Heart left ventricle (tissue), 16 donors: ENCODE measurements at regions of chr17 and their contacts with region 1.

Region 1: GRCh38 chr17:55757659-55758058 is 6.8 kb downstream of the PCTP start:
- DNase-seq: no peak
- ATAC-seq: no peak
- H3K4me3 ChIP-seq: no peak overlapping the region
- H3K27ac ChIP-seq: no peak overlapping the region
- H3K4me1 ChIP-seq: peaks cover 0 to 30% (median 5%) of the 10 kb centered on the region in 12 donors
- H3K27me3 ChIP-seq: no peaks in the 10 kb centered on the region
- CTCF ChIP-seq: no peak
- POLR2A ChIP-seq: no peak

Region 2: DNA sequence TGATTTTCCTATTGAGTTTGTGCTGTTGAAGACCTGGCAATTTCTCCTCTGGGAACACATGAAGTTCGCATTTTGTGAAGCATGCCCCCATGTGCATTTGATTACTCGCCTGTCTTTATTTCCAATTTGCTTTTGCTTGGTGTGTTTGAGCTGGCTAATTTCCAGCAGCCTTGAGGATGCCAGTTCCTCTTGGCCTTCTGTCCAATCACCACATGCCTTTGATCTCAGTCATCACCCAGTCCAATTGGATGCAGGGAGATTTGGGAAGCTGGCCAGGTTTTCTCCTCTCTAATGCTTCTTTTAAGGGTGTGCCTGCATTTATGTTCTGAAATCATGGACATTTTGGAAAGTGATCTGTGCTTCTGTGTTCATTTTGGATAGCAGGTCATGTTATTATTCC is 31.2 kb before region 1 on chr17:
- intact Hi-C with region 1: loop called in 1 of 10 experiments (anchors 5 kb)
- DNase-seq: peak in 4 of 5 donors; percentile 58 to 77 (median 68)
- ATAC-seq: peak; percentile 31 to 65 (median 49)
- H3K4me3 ChIP-seq: no peak overlapping the region
- H3K27ac ChIP-seq: peak overlapping the region in 4 of 12 donors; percentile 1 to 78 (median 22)
- H3K4me1 ChIP-seq: peaks cover 0 to 56% (median 24%) of the 10 kb centered on the region in 12 donors
- H3K27me3 ChIP-seq: no peaks in the 10 kb centered on the region
- CTCF ChIP-seq: no peak
- POLR2A ChIP-seq: no peak